Stomach (tissue), 19 donors: ENCODE measurements at regions of chr6 and their contacts with region 1.

Region 1: DNA sequence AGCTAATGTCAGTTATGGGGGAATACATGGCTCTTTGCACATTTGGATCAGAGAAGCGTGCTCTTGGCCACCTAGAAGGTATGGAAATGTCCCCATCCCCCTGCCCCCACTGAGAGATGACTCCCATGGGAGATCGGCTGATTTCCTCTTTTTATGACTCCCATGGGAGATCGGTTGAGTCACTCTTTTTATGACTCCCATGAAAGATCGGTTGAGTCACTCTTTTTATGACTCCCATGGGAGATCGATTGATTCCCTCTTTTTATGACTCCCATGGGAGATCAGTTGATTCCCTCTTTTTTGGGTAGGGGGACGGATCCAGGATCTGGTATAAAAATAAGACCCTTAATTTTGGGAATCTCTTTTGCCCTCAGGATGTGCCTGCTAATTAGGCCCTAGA is 10.3 kb upstream of the TAAR9 start:
- DNase-seq: no peak
- H3K4me3 ChIP-seq: no peak overlapping the region
- H3K27ac ChIP-seq: no peak overlapping the region
- H3K4me1 ChIP-seq: peaks cover 0 to 4% (median 2%) of the 10 kb centered on the region in 4 donors
- H3K27me3 ChIP-seq: no peaks in the 10 kb centered on the region
- CTCF ChIP-seq: no peak
- EP300 ChIP-seq: no peak
- POLR2A ChIP-seq: no peak

Region 2: DNA sequence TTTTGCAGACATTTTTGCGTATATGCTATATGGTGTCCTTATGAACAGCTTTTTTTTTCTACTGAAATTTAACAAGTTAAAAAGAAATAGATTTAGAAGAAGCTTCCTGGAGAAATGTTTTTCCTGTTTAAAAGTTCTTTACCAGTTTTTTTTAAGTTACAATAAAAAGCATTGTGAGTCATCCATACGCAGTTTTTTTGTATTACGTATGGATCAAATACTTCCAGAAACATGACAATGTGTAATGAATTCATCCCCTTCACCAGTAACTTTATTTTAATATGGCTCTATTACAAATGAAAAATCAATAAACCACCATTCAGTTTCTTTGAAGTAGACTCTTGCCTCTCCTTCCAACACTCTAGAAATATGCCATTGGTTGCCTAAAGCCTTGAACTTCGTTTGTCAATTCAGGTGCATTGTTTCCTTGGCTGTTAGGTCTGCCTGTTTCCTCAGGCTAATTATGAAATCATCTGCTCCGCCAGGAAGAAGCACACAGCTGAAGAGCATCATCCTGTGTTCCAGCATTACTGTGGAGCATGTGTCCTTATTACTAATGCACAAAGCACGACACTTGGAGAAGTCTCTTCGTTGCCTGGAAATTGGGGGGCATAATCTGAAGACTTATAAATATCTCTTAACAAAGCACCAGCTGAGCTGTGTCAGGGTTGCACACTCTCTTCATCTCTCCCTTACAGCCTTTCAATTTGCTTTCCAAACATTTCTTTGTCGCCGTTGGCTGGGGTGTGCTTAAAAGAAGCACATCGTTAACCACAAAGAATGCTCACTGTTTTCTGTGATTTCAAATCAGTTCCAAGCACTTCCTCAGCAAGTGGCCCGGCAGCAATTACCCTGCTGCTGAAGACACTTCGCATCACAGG is 136.2 kb before region 1 on chr6:
- intact Hi-C with region 1: no loop called
- DNase-seq: peak in 1 of 2 donors; percentile 80
- H3K4me3 ChIP-seq: no peak overlapping the region
- H3K27ac ChIP-seq: peak overlapping the region in 4 of 5 donors; percentile 13 to 67 (median 38)
- H3K4me1 ChIP-seq: no peaks in the 10 kb centered on the region
- H3K27me3 ChIP-seq: no peaks in the 10 kb centered on the region
- CTCF ChIP-seq: no peak
- EP300 ChIP-seq: no peak
- POLR2A ChIP-seq: no peak

Region 3: GRCh38 chr6:132669690-132670291 is 142.0 kb after region 1 on chr6:
- intact Hi-C with region 1: loop called (anchors 5 kb)
- DNase-seq: peak in 1 of 2 donors; percentile 64
- H3K4me3 ChIP-seq: no peak overlapping the region
- H3K27ac ChIP-seq: no peak overlapping the region
- H3K4me1 ChIP-seq: peaks cover 3 to 21% (median 9%) of the 10 kb centered on the region in 4 donors
- H3K27me3 ChIP-seq: no peaks in the 10 kb centered on the region
- CTCF ChIP-seq: peak in 5 of 7 experiments; percentile 17 to 61 (median 57)
- EP300 ChIP-seq: no peak
- POLR2A ChIP-seq: no peak